AG04449 (cell line): ENCODE measurements at regions of chr9 and their contacts with region 1.

Region 1: GRCh38 chr9:120755827-120756434 is 37.3 kb downstream of the FBXW2 start:
- DNase-seq: no peak
- H3K4me3 ChIP-seq: no peak overlapping the region
- CTCF ChIP-seq: peak; percentile 68

Region 2: DNA sequence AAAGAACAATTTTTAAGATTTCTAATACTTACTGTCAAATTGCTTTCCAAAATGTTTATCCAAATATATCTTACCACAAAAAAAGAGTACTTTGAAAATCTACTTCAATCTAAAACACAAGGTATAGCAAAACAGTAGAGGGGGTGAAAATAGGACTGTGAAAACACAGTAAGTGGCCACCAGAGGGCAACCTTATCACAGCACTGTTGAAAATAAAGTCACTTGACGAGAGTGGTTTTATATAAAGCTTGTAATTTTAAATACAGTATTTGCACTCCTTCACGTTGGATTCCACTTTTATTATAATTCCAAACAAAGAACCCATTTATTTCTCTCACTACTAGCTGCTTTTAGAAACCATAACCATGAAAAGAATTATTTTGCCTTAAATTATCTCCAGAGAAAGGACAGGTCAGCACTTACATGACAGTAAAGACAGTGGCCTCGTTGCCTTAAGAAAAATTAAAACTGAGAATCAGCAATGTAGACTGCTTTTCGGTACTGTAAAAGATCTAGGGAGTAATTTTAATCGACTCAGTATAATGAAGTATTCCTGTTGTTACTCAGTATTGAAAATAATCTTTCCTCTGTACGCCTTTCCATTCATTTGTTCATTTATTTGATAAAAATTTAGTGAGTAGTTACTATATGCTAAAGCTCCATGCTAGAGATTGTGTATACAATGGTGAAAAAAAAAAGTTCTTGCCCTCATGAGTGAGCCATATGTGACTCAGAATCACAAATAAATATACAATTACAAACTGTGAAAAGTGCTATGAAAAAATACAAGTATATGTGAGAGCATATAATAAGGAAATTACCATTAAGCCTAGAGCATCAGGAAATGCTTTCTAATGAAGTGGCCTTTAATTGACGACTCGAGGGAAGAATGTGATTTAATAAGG is 135.9 kb before region 1 on chr9:
- CTCF ChIA-PET with region 1: interaction called, 12 read pairs
- POLR2A ChIA-PET with region 1: no interaction called
- DNase-seq: no peak
- H3K4me3 ChIP-seq: no peak overlapping the region
- CTCF ChIP-seq: peak; percentile 71

Region 3: DNA sequence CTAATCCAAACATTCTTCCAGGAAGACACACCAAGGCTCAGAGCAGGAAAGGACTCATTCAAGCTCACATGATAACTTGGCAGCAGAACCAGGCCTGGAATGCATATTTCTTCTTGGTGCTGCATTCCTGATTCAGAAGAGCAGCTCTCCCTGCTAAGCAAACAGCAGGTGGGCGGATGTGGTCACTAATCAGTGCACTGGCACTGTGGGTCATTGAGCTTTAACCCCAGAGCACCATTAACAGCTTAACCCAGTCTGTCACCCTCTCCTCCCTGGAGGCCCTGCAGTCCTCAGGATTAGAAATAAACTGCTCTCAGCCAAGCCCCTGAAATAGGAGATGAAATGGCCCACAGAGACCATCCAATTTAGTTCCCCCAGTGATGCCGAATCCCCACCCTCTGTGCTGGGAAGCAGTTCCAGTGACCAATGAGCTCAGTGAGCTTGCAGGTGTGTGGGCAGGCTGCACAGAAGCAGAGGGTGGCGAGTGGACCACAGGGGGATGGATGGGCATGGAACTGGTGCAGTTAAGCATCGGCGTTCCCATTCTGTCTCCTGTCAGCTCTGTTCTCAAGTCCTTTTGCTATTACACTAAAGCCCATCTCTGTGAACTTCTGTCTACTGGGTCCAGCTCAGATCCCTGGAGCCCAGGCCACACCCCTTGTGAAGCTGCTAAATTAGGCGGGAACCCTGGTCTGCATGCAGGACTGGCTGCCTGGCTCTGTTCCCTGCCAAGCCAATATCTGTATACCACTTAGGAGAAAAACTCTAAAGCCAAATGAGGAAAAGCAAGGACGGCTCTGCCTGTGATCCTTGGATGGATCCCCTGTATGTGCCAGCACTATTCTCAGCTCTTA is 25.0 kb before region 1 on chr9:
- CTCF ChIA-PET with region 1: interaction called, 14 read pairs
- POLR2A ChIA-PET with region 1: no interaction called
- DNase-seq: peak; percentile 83
- H3K4me3 ChIP-seq: no peak overlapping the region
- CTCF ChIP-seq: no peak

Region 4: DNA sequence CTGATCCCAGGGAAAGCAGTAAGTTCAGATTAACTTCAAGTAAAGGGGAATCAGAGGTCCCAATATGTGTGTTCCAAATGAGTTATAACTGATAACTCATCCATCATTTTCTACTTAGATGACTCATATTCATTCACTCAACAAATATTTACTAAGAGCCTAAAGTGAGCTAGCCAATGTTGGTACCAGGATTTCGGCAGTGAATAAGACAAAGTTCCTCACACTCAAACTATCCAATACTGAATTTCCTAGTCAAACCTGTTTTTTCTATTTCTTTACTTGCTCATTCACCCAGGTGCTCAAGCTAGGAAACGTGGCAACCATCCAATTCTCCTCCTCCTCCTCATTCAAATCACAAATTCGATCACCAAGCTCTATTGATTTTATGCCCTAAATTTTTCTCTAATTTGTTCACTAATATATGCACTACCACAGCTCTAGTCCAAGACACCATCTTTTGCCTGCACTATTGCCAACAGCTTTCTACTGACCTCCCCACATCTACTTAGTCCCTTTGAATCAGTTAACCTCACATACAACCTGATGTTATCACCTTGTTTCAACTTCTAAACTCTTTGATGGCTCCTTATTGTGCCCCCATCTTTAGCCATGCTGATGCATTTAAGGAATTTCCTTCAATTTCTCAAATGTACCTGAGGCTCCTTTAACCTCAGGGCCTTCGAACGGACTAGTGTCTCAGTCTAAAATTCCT is 11.7 kb after region 1 on chr9:
- CTCF ChIA-PET with region 1: interaction called, 95 read pairs
- POLR2A ChIA-PET with region 1: no interaction called
- DNase-seq: no peak
- H3K4me3 ChIP-seq: no peak overlapping the region
- CTCF ChIP-seq: no peak

Region 5: DNA sequence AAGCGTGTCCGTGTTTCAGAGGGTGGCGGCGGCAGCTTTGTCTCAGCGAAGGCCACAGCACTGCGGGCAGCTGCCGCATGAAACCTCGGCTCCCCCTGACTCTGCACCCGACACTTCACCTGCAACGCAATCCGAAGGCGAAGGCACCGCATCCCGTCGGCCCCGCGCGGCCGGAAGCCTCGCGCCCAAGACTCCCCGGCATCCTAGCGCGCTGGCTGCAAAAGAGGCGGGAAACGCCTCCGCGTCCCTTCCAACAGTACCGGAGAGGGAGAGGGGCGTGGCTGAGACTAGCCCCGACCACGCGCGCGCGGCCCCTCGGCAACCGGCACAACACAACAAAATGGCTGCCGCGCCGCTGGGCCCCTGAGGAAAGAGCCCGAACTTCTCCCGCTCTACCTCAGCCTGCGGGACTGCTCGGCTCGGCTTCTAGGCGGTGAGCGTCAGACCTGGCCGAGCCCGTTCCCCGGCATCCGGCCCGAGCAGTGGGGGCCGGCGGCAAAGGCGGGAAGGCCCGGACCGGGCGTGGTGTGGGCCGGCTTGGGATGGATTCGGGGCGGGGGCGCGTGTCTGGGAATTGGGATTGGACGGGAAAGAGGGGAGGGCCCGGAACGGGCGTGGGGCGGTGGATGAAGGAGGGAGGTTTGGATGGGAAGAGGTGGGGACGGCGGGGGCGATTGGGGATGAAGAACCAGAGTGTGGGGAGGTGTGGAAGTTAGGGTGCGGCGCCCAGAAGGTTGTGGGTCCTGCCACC is 318.9 kb after region 1 on chr9 and contains the start of gene CNTRL:
- CTCF ChIA-PET with region 1: interaction called, 14 read pairs
- POLR2A ChIA-PET with region 1: no interaction called
- DNase-seq: no peak
- H3K4me3 ChIP-seq: peak within 1 kb of the TSS; percentile 78
- CTCF ChIP-seq: no peak

Region 6: GRCh38 chr9:121120386-121120785 is 364.5 kb after region 1 on chr9:
- CTCF ChIA-PET with region 1: no interaction called
- POLR2A ChIA-PET with region 1: no interaction called
- DNase-seq: no peak
- H3K4me3 ChIP-seq: no peak overlapping the region
- CTCF ChIP-seq: no peak